SK-N-SH (cell line): ENCODE measurements at regions of chr5 and their contacts with region 1.

Region 1: DNA sequence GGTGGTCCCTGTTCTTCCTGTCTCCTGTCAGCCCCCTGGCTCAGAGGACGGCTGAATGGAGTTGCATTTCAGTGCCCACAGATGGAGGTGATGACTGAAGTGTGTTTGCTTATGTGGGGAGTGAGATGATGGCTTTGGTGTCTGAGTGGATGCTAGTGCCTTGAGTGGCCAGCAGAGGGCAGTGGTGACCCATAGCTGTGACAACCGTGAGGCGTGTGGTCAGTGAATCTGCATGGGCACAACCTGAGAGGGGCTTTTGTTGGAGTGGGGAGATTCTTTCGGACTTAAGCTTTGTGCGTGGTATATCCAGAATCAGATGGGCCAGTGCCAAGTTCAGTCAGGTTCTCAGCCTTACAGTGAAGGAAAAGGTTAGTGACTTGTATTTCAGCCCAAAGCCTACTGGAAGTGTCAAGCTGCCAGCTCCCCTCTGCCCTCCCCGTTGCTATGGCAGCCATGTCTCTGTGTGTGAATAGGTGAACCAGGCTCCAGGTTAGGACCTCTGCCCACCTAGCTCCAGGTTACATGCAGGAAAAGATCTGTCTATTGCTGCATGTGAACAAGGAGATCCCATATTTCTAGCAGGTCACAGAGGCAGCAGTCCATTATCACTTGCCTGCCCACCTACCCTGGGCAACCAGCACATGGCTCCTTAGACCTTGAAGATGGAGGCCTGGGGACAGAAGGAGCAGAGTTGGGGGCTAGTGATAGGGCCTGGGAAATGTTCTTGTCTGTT is 14.7 kb upstream of the CXXC5 start:
- DNase-seq: peak; percentile 77
- H3K4me3 ChIP-seq: no peak overlapping the region; a peak in 1 of 4 replicates
- H3K27ac ChIP-seq: peak overlapping the region in 1 of 2 experiments; percentile 12; a peak in 1 of 4 replicates
- H3K4me1 ChIP-seq: peaks cover 29 to 43% of the 10 kb centered on the region in 2 experiments
- H3K27me3 ChIP-seq: no peaks in the 10 kb centered on the region
- CTCF ChIP-seq: peak; percentile 98
- EP300 ChIP-seq: no peak
- RAD21 ChIP-seq: peak; percentile 97

Region 2: DNA sequence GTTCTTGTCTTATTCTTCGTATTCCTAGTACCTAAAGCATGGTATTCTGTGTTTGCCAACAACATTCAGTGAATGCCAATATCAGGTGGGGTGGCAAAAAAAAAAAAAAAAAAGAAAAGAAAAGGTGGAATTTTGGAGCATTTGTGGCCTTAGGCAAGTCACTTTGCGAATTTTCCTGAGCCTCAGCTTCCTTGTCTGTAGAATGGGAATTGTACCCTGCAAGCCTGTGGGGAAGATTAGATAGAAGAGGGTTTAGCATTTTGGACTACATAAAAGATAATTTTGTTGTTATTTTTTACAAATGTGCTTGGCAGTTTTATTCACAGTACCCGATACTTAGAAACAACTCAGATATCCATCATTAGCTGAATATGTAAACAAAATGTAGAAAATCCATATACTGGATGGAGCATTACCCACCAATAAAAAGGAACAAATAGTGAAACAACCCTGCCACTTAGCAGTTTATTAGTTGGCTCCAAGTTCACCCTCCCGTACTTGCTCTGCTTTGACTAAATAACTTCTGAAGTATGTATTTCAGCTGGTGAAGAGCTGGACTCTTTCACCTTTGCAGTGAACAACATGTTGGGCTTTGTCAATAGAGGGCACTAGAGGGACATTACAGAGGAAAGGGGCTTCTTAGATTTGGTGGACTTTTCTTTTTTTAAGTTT is 58.7 kb before region 1 on chr5:
- CTCF ChIA-PET with region 1: interaction called, 18 read pairs
- POLR2A ChIA-PET with region 1: no interaction called
- DNase-seq: peak; percentile 43
- H3K4me3 ChIP-seq: no peak overlapping the region
- H3K27ac ChIP-seq: peak overlapping the region in 1 of 2 experiments; percentile 18; a peak in 1 of 4 replicates
- H3K4me1 ChIP-seq: no peaks in the 10 kb centered on the region; a peak in 2 of 4 replicates
- H3K27me3 ChIP-seq: no peaks in the 10 kb centered on the region
- CTCF ChIP-seq: peak; percentile 80
- EP300 ChIP-seq: no peak
- RAD21 ChIP-seq: peak; percentile 67

Region 3: GRCh38 chr5:139651853-139652787 is 18.7 kb after region 1 on chr5:
- CTCF ChIA-PET with region 1: interaction called, 238 read pairs
- POLR2A ChIA-PET with region 1: interaction called, 130 read pairs
- DNase-seq: peak; percentile 89
- H3K4me3 ChIP-seq: peak overlapping the region; percentile 19 to 91; a peak in 3 of 4 replicates
- H3K27ac ChIP-seq: peak overlapping the region; percentile 78 to 96
- H3K4me1 ChIP-seq: peaks cover 54 to 66% of the 10 kb centered on the region in 2 experiments
- H3K27me3 ChIP-seq: no peaks in the 10 kb centered on the region
- CTCF ChIP-seq: no peak
- EP300 ChIP-seq: 0 out of 4 replicates have a peak, but pooled peaks of 1 of the 2 experiments have one; percentile 10
- RAD21 ChIP-seq: no peak

Region 4: GRCh38 chr5:139678751-139679750 is 45.6 kb after region 1 on chr5:
- CTCF ChIA-PET with region 1: interaction called, 310 read pairs
- POLR2A ChIA-PET with region 1: interaction called, 13 read pairs
- DNase-seq: peak; percentile 56
- H3K4me3 ChIP-seq: no peak overlapping the region
- H3K27ac ChIP-seq: peak overlapping the region; percentile 54 to 99; a peak in 3 of 4 replicates
- H3K4me1 ChIP-seq: peaks cover 27 to 50% of the 10 kb centered on the region in 2 experiments; a peak in 3 of 4 replicates
- H3K27me3 ChIP-seq: no peaks in the 10 kb centered on the region
- CTCF ChIP-seq: no peak
- EP300 ChIP-seq: no peak
- RAD21 ChIP-seq: no peak

Region 5: GRCh38 chr5:139711067-139711905 is 77.8 kb after region 1 on chr5:
- CTCF ChIA-PET with region 1: interaction called, 93 read pairs
- POLR2A ChIA-PET with region 1: interaction called, 35 read pairs
- DNase-seq: peak; percentile 82
- H3K4me3 ChIP-seq: peak overlapping the region; percentile 55 to 67
- H3K27ac ChIP-seq: peak overlapping the region; percentile 95 to 99
- H3K4me1 ChIP-seq: peaks cover 21 to 48% of the 10 kb centered on the region in 2 experiments
- H3K27me3 ChIP-seq: no peaks in the 10 kb centered on the region
- CTCF ChIP-seq: peak; percentile 38
- EP300 ChIP-seq: peak in 1 of 2 experiments; percentile 29; a peak in 1 of 4 replicates
- RAD21 ChIP-seq: peak; percentile 8; the same call in 1 of the 2 replicates

Region 6: DNA sequence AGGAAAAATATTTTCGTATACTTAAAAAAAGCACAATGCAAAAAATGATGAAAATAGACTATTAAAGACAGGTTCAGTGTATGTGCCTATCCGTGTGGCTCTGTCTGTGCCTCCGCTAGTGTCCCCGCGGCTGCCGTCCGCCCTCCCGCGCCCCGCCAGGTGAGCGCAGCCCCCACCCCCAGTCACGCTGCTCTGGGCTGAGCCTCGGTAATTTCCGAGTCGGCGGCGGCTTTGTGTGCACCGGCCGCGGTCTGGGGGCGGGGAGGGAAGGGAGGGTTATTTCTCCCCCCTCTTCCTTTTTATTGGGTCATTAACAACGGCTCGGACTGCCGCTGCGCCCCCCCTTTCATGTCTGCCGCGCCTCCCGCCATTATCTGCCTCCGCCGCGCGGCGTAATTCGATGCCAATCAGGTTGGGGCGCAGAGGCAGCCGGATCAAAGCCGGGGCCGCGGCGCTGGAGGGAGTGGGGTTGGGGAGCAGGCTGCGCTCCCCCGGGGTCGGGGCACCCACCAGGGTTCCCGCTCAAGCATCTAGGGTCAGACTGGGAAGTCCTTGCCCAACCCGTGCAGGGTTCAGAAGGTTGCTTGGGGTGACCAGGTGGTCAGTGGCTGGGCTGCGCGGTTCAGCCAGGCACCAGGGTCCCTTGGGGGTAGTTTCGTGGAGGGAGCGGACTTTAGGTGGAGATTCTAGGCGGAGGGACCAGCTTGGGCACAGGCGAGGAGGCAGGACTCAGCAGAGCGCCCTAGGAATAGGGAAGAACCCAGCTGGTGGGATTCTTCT is 122.6 kb after region 1 on chr5:
- CTCF ChIA-PET with region 1: interaction called, 627 read pairs
- POLR2A ChIA-PET with region 1: interaction called, 4 read pairs
- DNase-seq: peak; percentile 70
- H3K4me3 ChIP-seq: no peak overlapping the region
- H3K27ac ChIP-seq: no peak overlapping the region
- H3K4me1 ChIP-seq: peaks cover 13 to 37% of the 10 kb centered on the region in 2 experiments; a peak in 3 of 4 replicates
- H3K27me3 ChIP-seq: no peaks in the 10 kb centered on the region
- CTCF ChIP-seq: no peak
- EP300 ChIP-seq: no peak
- RAD21 ChIP-seq: no peak